WTC11 (cell line): ENCODE measurements at regions of chr3 and their contacts with region 1.

Region 1: GRCh38 chr3:183481582-183481981 is 53.2 kb upstream of the MCF2L2 start:
- DNase-seq: no peak
- ATAC-seq: no peak
- H3K4me3 Mint-ChIP-seq: no peak overlapping the region
- H3K27ac Mint-ChIP-seq: no peak overlapping the region
- H3K4me1 Mint-ChIP-seq: peaks cover 23% of the 10 kb centered on the region
- H3K27me3 Mint-ChIP-seq: no peaks in the 10 kb centered on the region
- CTCF ChIP-seq: no peak

Region 2: DNA sequence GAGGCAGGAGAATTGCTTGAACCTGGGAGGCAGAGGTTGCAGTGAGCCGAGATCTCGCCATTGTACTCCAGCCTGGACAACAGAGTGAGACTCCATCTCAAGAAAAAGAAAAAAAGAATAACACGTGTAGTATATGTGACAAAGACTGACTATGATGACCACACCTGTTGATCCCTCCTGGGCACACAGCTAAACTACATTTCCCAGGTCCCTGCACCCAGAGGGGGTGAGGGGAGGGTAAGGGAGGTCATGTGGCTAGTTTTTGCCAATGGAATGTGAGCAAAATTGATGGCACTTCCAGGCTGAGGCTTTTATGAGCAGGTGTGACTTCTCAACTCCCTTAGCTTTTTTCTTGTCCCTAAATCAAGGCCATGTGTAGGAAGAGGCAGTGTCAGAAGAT is 15.7 kb after region 1 on chr3:
- CTCF ChIA-PET with region 1: interaction called, 14 read pairs
- POLR2A ChIA-PET with region 1: no interaction called
- DNase-seq: no peak
- ATAC-seq: peak; percentile 78
- H3K4me3 Mint-ChIP-seq: no peak overlapping the region
- H3K27ac Mint-ChIP-seq: no peak overlapping the region
- H3K4me1 Mint-ChIP-seq: peaks cover 10% of the 10 kb centered on the region
- H3K27me3 Mint-ChIP-seq: peaks cover 4% of the 10 kb centered on the region; the same call in 1 of the 2 replicates
- CTCF ChIP-seq: no peak

Region 3: DNA sequence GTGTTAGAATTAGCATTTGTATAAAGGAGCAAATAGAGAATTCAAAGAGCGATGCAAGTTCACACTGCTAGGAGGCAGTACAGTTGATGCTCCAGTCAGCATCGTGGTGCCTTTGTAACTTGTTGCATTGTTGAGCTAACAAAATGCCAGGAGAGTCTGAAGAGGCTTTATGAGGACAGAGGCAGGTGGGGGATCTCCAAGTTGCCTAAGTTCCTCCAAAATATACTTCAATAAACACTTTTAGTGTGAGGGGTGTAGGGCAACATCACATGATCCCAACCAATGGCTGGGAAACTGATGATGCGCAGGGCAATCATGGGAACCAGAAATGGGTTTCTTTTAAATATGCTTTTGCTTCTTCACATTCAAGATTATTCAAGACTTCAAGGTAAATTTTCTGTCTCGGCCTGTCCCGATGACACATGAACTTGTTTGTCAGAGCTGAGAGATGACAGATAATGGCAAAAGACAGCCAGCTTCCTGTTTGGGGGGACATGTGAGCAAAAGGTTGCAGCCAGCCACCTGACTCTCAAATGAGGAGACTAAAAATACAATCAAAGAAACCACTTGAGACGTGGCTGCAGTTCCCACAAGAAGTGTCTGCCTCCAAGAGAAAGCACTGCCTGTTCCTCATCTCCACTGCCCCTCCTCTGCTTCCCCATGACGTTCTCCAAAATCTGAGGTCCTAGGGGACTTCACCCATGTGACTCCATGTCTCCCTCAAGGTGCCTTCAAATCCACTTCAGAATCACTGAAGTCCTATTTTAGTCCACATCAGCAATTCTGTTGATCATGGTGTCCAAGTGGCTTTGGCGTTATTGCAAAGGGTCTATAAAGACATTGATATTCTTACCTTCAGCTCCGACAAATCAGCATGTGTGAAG is 34.6 kb after region 1 on chr3:
- CTCF ChIA-PET with region 1: interaction called, 13 read pairs
- POLR2A ChIA-PET with region 1: no interaction called
- DNase-seq: no peak
- ATAC-seq: no peak; the same call in 1 of the 2 replicates
- H3K4me3 Mint-ChIP-seq: no peak overlapping the region
- H3K27ac Mint-ChIP-seq: no peak overlapping the region
- H3K4me1 Mint-ChIP-seq: peaks cover 15% of the 10 kb centered on the region
- H3K27me3 Mint-ChIP-seq: peaks cover 19% of the 10 kb centered on the region
- CTCF ChIP-seq: no peak

Region 4: DNA sequence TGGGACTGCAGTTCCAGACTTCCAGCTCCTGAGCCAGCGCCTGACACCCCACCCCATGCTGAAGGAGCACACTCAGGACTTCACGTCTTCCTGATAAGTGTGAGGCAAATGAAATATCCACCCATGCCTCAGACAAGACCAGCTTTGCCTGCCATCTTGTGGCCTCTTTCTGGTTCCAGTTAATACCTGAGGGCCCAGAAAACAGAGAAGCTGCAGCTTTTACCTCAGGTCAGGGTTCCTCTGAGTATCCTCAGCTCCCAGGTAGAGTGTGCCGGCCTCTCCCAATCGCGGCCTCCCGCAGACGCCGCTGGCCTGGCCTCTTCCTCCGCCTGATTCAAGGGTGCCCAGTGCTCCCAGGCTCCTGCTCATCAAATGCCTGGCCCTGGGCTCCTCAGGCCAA is 79.0 kb after region 1 on chr3:
- CTCF ChIA-PET with region 1: interaction called, 14 read pairs
- POLR2A ChIA-PET with region 1: no interaction called
- DNase-seq: no peak
- ATAC-seq: peak; percentile 70
- H3K4me3 Mint-ChIP-seq: no peak overlapping the region
- H3K27ac Mint-ChIP-seq: no peak overlapping the region
- H3K4me1 Mint-ChIP-seq: peaks cover 14% of the 10 kb centered on the region
- H3K27me3 Mint-ChIP-seq: no peaks in the 10 kb centered on the region
- CTCF ChIP-seq: no peak

Region 5: GRCh38 chr3:183766745-183767606 is 285.4 kb after region 1 on chr3:
- CTCF ChIA-PET with region 1: interaction called, 15 read pairs
- POLR2A ChIA-PET with region 1: no interaction called
- DNase-seq: peak; percentile 80
- ATAC-seq: peak; percentile 94
- H3K4me3 Mint-ChIP-seq: no peak overlapping the region
- H3K27ac Mint-ChIP-seq: no peak overlapping the region
- H3K4me1 Mint-ChIP-seq: 0 out of 2 replicates have a peak, but pooled peaks cover 3% of the 10 kb centered on the region
- H3K27me3 Mint-ChIP-seq: no peaks in the 10 kb centered on the region
- CTCF ChIP-seq: peak; percentile 61

Region 6: DNA sequence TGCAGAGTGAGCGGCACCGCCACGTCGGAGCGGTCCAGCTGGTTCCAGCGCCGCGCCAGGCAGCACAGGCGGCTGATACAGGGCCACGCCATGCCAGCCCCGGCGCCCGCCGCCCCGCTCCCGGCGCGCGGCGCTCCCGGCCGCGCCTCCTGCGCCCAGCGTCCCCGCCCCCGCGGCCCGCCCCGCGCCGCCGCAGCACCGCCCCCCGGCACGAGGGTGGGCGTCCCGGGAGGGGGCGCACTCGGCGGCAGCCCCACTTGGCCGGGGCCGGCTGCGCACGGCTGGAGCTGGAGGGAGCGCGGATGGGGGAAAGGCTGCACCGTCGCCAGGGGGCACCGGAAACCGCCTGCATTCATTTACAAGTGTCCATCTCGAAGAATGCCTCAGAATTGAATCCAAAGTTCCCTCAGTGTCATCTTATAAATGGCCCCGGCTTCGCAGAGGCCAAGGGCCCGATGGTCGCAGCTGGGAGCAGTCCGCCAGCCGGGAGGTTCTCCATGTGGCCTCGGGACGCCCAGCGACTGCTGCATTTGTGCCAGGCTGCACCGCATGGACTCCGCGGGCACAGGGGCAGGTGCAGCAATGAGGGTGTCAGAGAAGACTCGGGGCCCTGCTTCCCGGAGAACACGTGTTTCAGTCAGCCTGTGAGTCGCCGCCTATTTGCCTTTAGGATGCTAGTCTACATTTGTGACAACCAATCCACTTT is 344.0 kb after region 1 on chr3 and contains the start of gene MAP6D1:
- CTCF ChIA-PET with region 1: interaction called, 12 read pairs
- POLR2A ChIA-PET with region 1: no interaction called
- DNase-seq: peak; percentile 80
- ATAC-seq: peak; percentile 81
- H3K4me3 Mint-ChIP-seq: peak within 1 kb of the TSS; percentile 73
- H3K27ac Mint-ChIP-seq: peak within 1 kb of the TSS; percentile 77
- H3K4me1 Mint-ChIP-seq: peaks cover 27% of the 10 kb centered on the region
- H3K27me3 Mint-ChIP-seq: peaks cover 12% of the 10 kb centered on the region
- CTCF ChIP-seq: peak; percentile 33; the same call in 1 of the 2 replicates
- total RNA-seq, gene MAP6D1: 4.3 to 6.3 TPM (median 5.0 TPM) in 3 replicates